Common myeloid progenitor, CD34-positive (primary cell): ENCODE measurements at regions of chr22 and their contacts with region 1.

Region 1: GRCh38 chr22:31199183-31199582 is 12.9 kb upstream of the LIMK2 start:
- DNase-seq: peak in 2 of 3 donors; percentile 10 to 19
- H3K4me3 ChIP-seq: no peak overlapping the region
- H3K27ac ChIP-seq: no peak overlapping the region
- H3K4me1 ChIP-seq: peaks cover 0 to under 1% (median 0%) of the 10 kb centered on the region in 4 experiments
- H3K27me3 ChIP-seq: no peaks in the 10 kb centered on the region

Region 2: GRCh38 chr22:31211862-31212730 is 12.9 kb after region 1 on chr22 and contains the start of gene LIMK2:
- CTCF ChIA-PET with region 1: interaction called, 52 read pairs
- POLR2A ChIA-PET with region 1: no interaction called
- DNase-seq: peak; percentile 90 to 93 (median 93)
- H3K4me3 ChIP-seq: peak within 1 kb of the TSS; percentile 77 to 96 (median 94)
- H3K27ac ChIP-seq: peak within 1 kb of the TSS; percentile 55 to 79
- H3K4me1 ChIP-seq: peaks cover 19 to 52% (median 41%) of the 10 kb centered on the region in 4 experiments
- H3K27me3 ChIP-seq: no peaks in the 10 kb centered on the region